T-cell (primary cell): ENCODE measurements at regions of chr7 and their contacts with region 1.

Region 1: GRCh38 chr7:155644178-155644970 is at the start of gene RBM33:
- DNase-seq: peak; percentile 48 to 86 (median 71)
- ATAC-seq: peak; percentile 80 to 88 (median 85)
- H3K4me3 ChIP-seq: peak within 1 kb of the TSS; percentile 94 to 97
- H3K4me3 Mint-ChIP-seq: peak within 1 kb of the TSS; percentile 93 to 99 (median 98)
- H3K27ac ChIP-seq: peak within 1 kb of the TSS; percentile 85
- H3K27ac Mint-ChIP-seq: peak within 1 kb of the TSS; percentile 99 to 100
- H3K4me1 ChIP-seq: peaks cover 11 to 15% of the 10 kb centered on the region in 2 experiments
- H3K4me1 Mint-ChIP-seq: peaks cover 53 to 56% (median 54%) of the 10 kb centered on the region in 3 donors
- H3K27me3 ChIP-seq: no peaks in the 10 kb centered on the region
- H3K27me3 Mint-ChIP-seq: peaks cover 0 to 1% of the 10 kb centered on the region in 2 donors
- total RNA-seq, gene RBM33: 157 to 180 (median 170) TPM

Region 2: GRCh38 chr7:155097344-155097743 is 547.0 kb before region 1 on chr7:
- CTCF ChIA-PET with region 1: no interaction called
- POLR2A ChIA-PET with region 1: no interaction called
- DNase-seq: no peak
- ATAC-seq: no peak
- H3K4me3 ChIP-seq: no peak overlapping the region
- H3K4me3 Mint-ChIP-seq: no peak overlapping the region
- H3K27ac ChIP-seq: no peak overlapping the region
- H3K27ac Mint-ChIP-seq: no peak overlapping the region
- H3K4me1 ChIP-seq: no peaks in the 10 kb centered on the region
- H3K4me1 Mint-ChIP-seq: no peaks in the 10 kb centered on the region
- H3K27me3 ChIP-seq: peaks cover 0 to 30% of the 10 kb centered on the region in 2 experiments
- H3K27me3 Mint-ChIP-seq: peaks cover 24 to 26% of the 10 kb centered on the region in 2 donors

Region 3: GRCh38 chr7:155298834-155299534 is 345.4 kb before region 1 on chr7:
- CTCF ChIA-PET with region 1: no interaction called
- POLR2A ChIA-PET with region 1: interaction called in 1 of 2 experiments, 17 read pairs
- DNase-seq: peak; percentile 85 to 99 (median 96)
- ATAC-seq: peak; percentile 70 to 77 (median 72)
- H3K4me3 ChIP-seq: peak overlapping the region; percentile 38 to 62
- H3K4me3 Mint-ChIP-seq: peak overlapping the region; percentile 89 to 91 (median 90)
- H3K27ac ChIP-seq: peak overlapping the region; percentile 89
- H3K27ac Mint-ChIP-seq: peak overlapping the region; percentile 96 to 99
- H3K4me1 ChIP-seq: peaks cover 18 to 38% of the 10 kb centered on the region in 2 experiments
- H3K4me1 Mint-ChIP-seq: peaks cover 40 to 48% (median 40%) of the 10 kb centered on the region in 3 donors
- H3K27me3 ChIP-seq: no peaks in the 10 kb centered on the region
- H3K27me3 Mint-ChIP-seq: no peaks in the 10 kb centered on the region

Region 4: DNA sequence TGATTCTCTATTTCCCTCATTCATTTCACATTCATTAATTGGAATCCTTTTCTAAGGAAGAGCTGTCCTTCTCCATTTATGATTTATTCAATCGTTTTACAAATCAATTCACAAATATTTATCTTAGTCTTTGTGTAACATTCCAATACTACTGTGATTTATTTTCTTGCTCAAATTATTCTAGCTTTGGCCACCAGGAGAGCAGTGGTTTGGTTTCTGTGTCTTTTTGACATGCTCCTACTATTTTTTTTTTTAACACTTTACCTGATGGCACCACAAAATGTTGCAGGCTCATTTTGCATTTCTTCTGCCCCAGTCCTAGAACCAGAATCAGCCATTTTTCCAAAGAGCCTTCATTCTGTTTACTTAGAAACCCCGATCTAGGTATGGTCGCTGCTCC is 13.2 kb before region 1 on chr7:
- CTCF ChIA-PET with region 1: interaction called in 1 of 2 experiments, 4 read pairs
- POLR2A ChIA-PET with region 1: interaction called in 1 of 2 experiments, 11 read pairs
- DNase-seq: no peak
- ATAC-seq: no peak
- H3K4me3 ChIP-seq: no peak overlapping the region
- H3K4me3 Mint-ChIP-seq: no peak overlapping the region
- H3K27ac ChIP-seq: no peak overlapping the region
- H3K27ac Mint-ChIP-seq: no peak overlapping the region
- H3K4me1 ChIP-seq: no peaks in the 10 kb centered on the region
- H3K4me1 Mint-ChIP-seq: peaks cover 3 to 5% (median 4%) of the 10 kb centered on the region in 3 donors
- H3K27me3 ChIP-seq: no peaks in the 10 kb centered on the region
- H3K27me3 Mint-ChIP-seq: peaks cover 2 to 3% of the 10 kb centered on the region in 2 donors

Region 5: DNA sequence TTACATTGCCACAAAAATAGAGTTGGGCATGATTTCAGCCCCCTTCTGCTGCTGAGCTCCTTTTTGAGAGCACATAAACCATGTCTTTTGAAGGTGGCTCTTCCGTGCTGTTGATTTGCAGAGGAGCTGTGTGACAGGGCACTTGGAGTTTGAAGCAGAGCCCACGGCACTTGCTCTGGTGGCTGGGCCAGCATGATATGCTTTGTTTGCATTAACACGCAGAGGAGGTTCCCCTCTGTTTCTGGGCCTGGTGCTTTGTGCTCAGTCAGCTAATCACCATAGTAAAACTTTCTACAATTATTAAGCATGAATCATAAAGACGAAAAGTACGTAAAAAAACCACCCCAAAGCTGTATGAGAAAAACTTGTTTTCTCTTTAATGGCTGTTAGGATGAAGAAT is 40.2 kb after region 1 on chr7:
- CTCF ChIA-PET with region 1: interaction called in 1 of 2 experiments, 5 read pairs
- POLR2A ChIA-PET with region 1: interaction called, 5 to 17 read pairs
- DNase-seq: no peak
- ATAC-seq: no peak
- H3K4me3 ChIP-seq: no peak overlapping the region
- H3K4me3 Mint-ChIP-seq: peak overlapping the region; percentile 6 to 59 (median 29)
- H3K27ac ChIP-seq: no peak overlapping the region
- H3K27ac Mint-ChIP-seq: peak overlapping the region; percentile 40 to 73
- H3K4me1 ChIP-seq: peaks cover 4 to 8% of the 10 kb centered on the region in 2 experiments
- H3K4me1 Mint-ChIP-seq: peaks cover 71 to 78% (median 77%) of the 10 kb centered on the region in 3 donors
- H3K27me3 ChIP-seq: no peaks in the 10 kb centered on the region
- H3K27me3 Mint-ChIP-seq: no peaks in the 10 kb centered on the region

Region 6: GRCh38 chr7:155824227-155824886 is 180.0 kb after region 1 on chr7:
- CTCF ChIA-PET with region 1: no interaction called
- POLR2A ChIA-PET with region 1: no interaction called
- DNase-seq: no peak
- ATAC-seq: no peak
- H3K4me3 ChIP-seq: no peak overlapping the region
- H3K4me3 Mint-ChIP-seq: no peak overlapping the region
- H3K27ac ChIP-seq: no peak overlapping the region
- H3K27ac Mint-ChIP-seq: no peak overlapping the region
- H3K4me1 ChIP-seq: no peaks in the 10 kb centered on the region
- H3K4me1 Mint-ChIP-seq: no peaks in the 10 kb centered on the region
- H3K27me3 ChIP-seq: peaks cover 0 to 31% of the 10 kb centered on the region in 2 experiments
- H3K27me3 Mint-ChIP-seq: peaks cover 15 to 38% of the 10 kb centered on the region in 2 donors

Region 7: GRCh38 chr7:156064971-156065386 is 420.6 kb after region 1 on chr7:
- CTCF ChIA-PET with region 1: no interaction called
- POLR2A ChIA-PET with region 1: no interaction called
- DNase-seq: no peak
- ATAC-seq: no peak
- H3K4me3 ChIP-seq: no peak overlapping the region
- H3K4me3 Mint-ChIP-seq: no peak overlapping the region
- H3K27ac ChIP-seq: no peak overlapping the region
- H3K27ac Mint-ChIP-seq: no peak overlapping the region
- H3K4me1 ChIP-seq: no peaks in the 10 kb centered on the region
- H3K4me1 Mint-ChIP-seq: no peaks in the 10 kb centered on the region
- H3K27me3 ChIP-seq: peaks cover 0 to 3% of the 10 kb centered on the region in 2 experiments
- H3K27me3 Mint-ChIP-seq: peaks cover 3 to 10% of the 10 kb centered on the region in 2 donors